PC-3 (cell line): ENCODE measurements at regions of chr11 and their contacts with region 1.

Region 1: GRCh38 chr11:63567044-63567840 is 4.1 kb upstream of the PLAAT2 start:
- DNase-seq: peak; percentile 97
- ATAC-seq: peak; percentile 85
- H3K4me3 ChIP-seq: peak overlapping the region; percentile 41
- H3K27ac ChIP-seq: peak overlapping the region; percentile 93
- H3K4me1 ChIP-seq: peaks cover 39% of the 10 kb centered on the region
- H3K27me3 ChIP-seq: no peaks in the 10 kb centered on the region
- CTCF ChIP-seq: no peak

Region 2: DNA sequence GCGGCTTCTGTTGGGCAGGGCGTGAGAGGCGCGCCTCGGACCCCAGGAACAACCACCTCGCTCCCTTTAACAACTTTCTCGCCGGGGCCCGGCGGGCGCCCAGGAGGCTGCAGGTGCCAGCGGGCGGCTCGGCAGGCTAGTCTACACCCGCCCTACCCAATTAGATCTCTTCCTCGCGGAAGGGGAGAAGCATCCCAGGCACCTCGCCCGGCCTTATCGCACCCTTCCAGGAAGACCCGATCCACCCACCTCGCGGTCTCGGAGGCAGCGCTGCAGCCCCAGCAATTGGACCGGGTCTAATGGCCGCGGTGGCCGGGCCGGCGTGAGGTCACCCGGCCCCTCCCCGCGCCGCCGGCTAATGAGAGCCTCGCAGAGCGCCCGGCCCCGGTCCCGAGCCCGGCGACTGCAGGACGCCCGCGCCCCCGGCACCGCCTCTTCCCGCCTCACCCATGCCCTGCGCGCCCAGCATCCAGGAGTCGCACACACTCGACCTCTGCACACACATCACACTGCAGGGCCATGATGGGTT is 47.0 kb after region 1 on chr11 and contains the start of gene PLAAT3:
- CTCF ChIA-PET with region 1: no interaction called
- POLR2A ChIA-PET with region 1: interaction called, 4 read pairs
- intact Hi-C with region 1: loop called (anchors 5 kb)
- DNase-seq: peak; percentile 77
- ATAC-seq: peak; percentile 85
- H3K4me3 ChIP-seq: peak within 1 kb of the TSS; percentile 83
- H3K27ac ChIP-seq: 0 out of 2 replicates have a peak within 1 kb of the TSS, but pooled peaks have one; percentile 2
- H3K4me1 ChIP-seq: peaks cover 4% of the 10 kb centered on the region; the same call in 1 of the 2 replicates
- H3K27me3 ChIP-seq: no peaks in the 10 kb centered on the region
- CTCF ChIP-seq: no peak
- total RNA-seq, gene PLAAT3: 57.8 and 69.0 TPM in 2 replicates